Sigmoid colon (tissue), 7 donors: ENCODE measurements at regions of chr1 and their contacts with region 1.

Region 1: DNA sequence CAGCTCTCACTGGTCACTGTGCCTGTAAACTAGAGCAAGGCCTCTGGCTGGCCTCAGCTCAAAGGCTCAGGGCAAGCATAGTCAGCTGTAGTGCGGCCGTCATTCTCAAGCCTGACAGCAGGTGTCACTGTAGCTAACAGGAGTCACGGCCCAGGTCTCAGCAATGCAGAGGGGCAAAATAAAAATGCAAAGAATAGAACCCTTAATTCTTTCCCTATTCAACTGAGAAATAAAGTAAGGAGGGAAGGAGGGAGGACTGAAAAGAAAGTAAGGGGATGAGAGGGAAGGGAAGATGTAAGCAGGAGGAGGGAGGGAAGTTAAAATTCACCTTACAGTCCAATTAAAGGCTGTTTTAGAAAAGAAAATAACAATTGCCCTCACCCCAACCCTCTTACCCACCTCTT is 106.1 kb downstream of the KIAA0319L start:
- DNase-seq: peak; percentile 86
- H3K4me3 ChIP-seq: no peak overlapping the region
- H3K27ac ChIP-seq: peak overlapping the region; percentile 37 to 69 (median 56)
- H3K4me1 ChIP-seq: peaks cover 0 to 38% (median 28%) of the 10 kb centered on the region in 4 donors
- H3K27me3 ChIP-seq: no peaks in the 10 kb centered on the region
- CTCF ChIP-seq: peak; percentile 67 to 81 (median 75)
- EP300 ChIP-seq: no peak
- POLR2A ChIP-seq: no peak

Region 2: DNA sequence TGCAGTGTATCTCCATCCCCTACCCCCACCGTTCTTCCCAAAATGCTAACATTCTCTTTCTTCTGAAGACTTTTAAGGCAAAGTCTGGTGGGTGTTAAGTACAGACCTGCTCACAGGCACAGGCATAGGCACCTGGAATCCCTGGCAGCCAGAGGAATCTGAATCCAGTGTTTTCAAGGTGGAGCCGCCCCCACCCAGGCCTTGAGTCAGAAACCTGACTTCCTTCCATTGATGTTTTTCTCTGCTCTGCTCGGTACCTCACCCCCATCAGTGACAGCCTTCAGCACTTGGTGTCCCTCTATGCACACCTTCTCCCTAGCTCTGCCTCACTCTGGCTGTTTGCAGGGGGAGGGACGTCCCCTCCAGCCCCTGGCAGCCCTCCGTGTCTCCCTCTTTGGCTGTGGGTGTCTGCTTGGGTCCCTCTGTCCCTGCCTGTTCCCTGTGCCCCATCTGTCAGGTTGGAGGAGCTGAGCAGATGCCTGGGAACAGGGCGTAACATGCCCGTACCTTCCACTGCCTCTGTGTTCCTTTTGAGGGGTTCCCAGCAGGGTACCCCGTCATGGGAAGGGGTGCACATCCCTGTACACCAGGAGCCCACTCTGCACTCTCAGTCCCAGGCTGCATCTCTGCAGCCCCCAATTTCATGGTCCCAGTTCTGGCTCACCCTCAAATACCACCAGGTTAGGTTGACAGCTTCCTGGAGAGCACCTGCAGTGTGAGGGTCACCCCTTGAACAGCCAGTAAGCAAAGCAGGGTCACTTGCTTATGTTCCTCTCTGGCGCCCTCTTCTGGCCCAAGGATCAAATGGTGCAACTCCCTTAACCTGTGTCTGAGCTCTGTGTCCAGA is 113.1 kb after region 1 on chr1:
- intact Hi-C with region 1: loop called (anchors 1 kb)
- DNase-seq: peak; percentile 85
- H3K4me3 ChIP-seq: no peak overlapping the region
- H3K27ac ChIP-seq: no peak overlapping the region
- H3K4me1 ChIP-seq: peaks cover 0 to 23% (median 20%) of the 10 kb centered on the region in 4 donors
- H3K27me3 ChIP-seq: no peaks in the 10 kb centered on the region
- CTCF ChIP-seq: peak; percentile 42 to 73 (median 59)
- EP300 ChIP-seq: no peak
- POLR2A ChIP-seq: no peak